IMR-90 (cell line): ENCODE measurements at regions of chr1 and their contacts with region 1.

Region 1: GRCh38 chr1:39142401-39143151 is 61.9 kb upstream of the MACF1 start:
- DNase-seq: no peak
- ATAC-seq: peak; percentile 74
- H3K4me3 ChIP-seq: no peak overlapping the region
- H3K27ac ChIP-seq: peak overlapping the region; percentile 96
- H3K4me1 ChIP-seq: peaks cover 26% of the 10 kb centered on the region
- H3K27me3 ChIP-seq: no peaks in the 10 kb centered on the region
- CTCF ChIP-seq: no peak
- POLR2A ChIP-seq: no peak
- RAD21 ChIP-seq: no peak

Region 2: DNA sequence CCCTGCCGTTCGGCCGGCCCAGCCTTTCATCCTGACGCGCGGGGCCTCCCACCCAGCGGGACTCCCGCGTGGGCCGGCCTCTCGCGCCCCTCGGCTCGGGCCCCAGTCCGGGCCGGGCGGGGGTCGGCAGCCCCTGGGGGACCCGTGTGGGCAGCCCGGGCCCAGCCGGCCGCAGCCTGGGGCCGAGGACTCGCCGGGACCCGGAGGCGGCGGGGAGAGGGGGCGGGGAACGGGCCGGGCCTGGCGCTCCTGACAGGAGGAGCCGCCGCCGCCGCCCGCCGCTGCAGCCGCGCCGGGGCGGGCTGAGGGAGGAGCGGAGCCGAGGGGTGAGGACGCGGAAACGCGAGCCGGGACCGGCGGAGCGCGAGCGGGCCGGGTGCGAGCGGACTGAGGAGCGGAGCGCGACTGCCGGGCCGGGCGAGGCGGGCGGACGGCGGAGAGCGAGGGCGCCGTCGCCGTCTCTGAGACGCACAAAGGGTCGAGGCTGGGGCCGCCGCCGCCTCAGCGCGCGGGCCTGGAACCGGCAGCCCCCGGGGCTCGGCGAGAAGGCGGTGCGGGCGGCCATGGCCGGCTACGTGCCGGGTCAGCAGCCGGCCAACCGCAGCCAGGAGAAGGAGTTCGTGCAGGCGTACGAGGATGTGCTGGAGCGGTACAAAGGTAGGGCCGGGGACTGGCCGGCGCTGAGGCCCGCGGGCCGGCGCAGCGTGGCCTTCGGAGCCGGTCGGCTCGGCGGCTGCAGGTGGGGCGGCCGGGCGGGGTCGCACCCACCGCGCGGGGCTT is 37.3 kb before region 1 on chr1:
- CTCF ChIA-PET with region 1: no interaction called
- POLR2A ChIA-PET with region 1: no interaction called
- dilution Hi-C with region 1: no loop called
- in situ Hi-C with region 1: no loop called
- intact Hi-C with region 1: loop called (anchors 5 kb)
- DNase-seq: peak; percentile 59
- ATAC-seq: peak; percentile 76
- H3K4me3 ChIP-seq: peak overlapping the region; percentile 95
- H3K27ac ChIP-seq: peak overlapping the region; percentile 97
- H3K4me1 ChIP-seq: peaks cover 19% of the 10 kb centered on the region
- H3K27me3 ChIP-seq: no peaks in the 10 kb centered on the region
- CTCF ChIP-seq: no peak
- POLR2A ChIP-seq: peak; percentile 39; the same call in 1 of the 2 replicates
- RAD21 ChIP-seq: no peak

Region 3: DNA sequence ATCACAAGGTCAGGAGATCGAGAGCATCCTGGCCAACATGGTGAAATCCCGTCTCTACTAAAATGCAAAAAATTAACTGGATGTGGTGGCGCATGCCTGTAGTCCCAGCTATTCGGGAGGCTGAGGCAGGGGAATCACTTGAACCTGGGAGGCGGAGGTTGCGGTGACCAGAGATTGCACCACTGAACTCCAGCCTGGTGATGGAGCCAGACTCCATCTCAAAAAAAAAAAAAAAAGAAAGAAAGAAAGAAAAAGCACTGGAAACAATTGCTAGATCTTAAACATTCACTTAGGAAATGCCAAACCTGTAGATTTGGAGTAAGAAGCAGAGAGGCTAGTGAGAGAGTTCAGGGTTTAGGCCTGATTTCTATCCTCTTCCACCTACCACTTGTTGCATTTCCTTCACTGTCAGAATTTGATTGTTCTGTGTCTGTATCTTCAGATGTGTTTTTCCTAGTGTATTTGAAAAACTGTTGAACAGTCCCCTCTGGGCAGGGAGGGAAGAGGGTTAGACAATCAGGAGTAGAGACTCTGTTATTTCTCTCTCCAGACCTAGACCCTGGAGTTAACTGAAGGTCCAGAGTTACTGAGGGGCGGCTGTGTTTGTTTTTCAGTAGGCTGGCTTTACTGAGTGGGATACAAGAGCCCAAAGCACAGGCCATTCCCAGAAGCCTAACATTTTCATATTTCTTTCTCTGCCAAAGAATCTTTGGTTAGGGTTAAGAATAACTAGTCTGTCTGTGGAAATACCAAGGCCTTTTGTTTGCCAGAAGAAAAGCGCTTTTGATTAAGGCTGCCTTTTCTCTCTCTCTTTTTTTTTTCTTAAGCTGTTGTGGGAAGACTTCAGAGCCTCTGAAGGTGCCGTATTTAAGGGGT is 30.8 kb after region 1 on chr1:
- CTCF ChIA-PET with region 1: no interaction called
- POLR2A ChIA-PET with region 1: interaction called, 34 read pairs
- dilution Hi-C with region 1: no loop called
- in situ Hi-C with region 1: no loop called
- intact Hi-C with region 1: loop called (anchors 2 kb)
- DNase-seq: no peak
- ATAC-seq: no peak; the same call in 1 of the 2 replicates
- H3K4me3 ChIP-seq: no peak overlapping the region
- H3K27ac ChIP-seq: peak overlapping the region; percentile 85; the same call in 1 of the 2 replicates
- H3K4me1 ChIP-seq: peaks cover 28% of the 10 kb centered on the region
- H3K27me3 ChIP-seq: no peaks in the 10 kb centered on the region
- CTCF ChIP-seq: peak; percentile 24
- POLR2A ChIP-seq: no peak
- RAD21 ChIP-seq: peak; percentile 23; the same call in 1 of the 2 replicates

Region 4: GRCh38 chr1:39183503-39184353 is 41.2 kb after region 1 on chr1:
- CTCF ChIA-PET with region 1: no interaction called
- POLR2A ChIA-PET with region 1: interaction called, 11 read pairs
- dilution Hi-C with region 1: no loop called
- in situ Hi-C with region 1: no loop called
- intact Hi-C with region 1: loop called (anchors 2 kb)
- DNase-seq: peak; percentile 74
- ATAC-seq: peak; percentile 22
- H3K4me3 ChIP-seq: no peak overlapping the region
- H3K27ac ChIP-seq: peak overlapping the region; percentile 0; the same call in 1 of the 2 replicates
- H3K4me1 ChIP-seq: peaks cover 19% of the 10 kb centered on the region
- H3K27me3 ChIP-seq: no peaks in the 10 kb centered on the region
- CTCF ChIP-seq: peak; percentile 27
- POLR2A ChIP-seq: no peak
- RAD21 ChIP-seq: peak; percentile 39